ENCODE measurements at regions of chr7 and their contacts with region 1.

Region 1: GRCh38 chr7:121547544-121548092 is 151.5 kb upstream of the FAM3C start:
- DNase-seq: peak; percentile 66
- H3K4me3 Mint-ChIP-seq: no peak overlapping the region
- H3K27ac Mint-ChIP-seq: peak overlapping the region; percentile 2
- H3K4me1 Mint-ChIP-seq: peaks cover 41% of the 10 kb centered on the region
- H3K27me3 Mint-ChIP-seq: peaks cover 2% of the 10 kb centered on the region

Region 2: DNA sequence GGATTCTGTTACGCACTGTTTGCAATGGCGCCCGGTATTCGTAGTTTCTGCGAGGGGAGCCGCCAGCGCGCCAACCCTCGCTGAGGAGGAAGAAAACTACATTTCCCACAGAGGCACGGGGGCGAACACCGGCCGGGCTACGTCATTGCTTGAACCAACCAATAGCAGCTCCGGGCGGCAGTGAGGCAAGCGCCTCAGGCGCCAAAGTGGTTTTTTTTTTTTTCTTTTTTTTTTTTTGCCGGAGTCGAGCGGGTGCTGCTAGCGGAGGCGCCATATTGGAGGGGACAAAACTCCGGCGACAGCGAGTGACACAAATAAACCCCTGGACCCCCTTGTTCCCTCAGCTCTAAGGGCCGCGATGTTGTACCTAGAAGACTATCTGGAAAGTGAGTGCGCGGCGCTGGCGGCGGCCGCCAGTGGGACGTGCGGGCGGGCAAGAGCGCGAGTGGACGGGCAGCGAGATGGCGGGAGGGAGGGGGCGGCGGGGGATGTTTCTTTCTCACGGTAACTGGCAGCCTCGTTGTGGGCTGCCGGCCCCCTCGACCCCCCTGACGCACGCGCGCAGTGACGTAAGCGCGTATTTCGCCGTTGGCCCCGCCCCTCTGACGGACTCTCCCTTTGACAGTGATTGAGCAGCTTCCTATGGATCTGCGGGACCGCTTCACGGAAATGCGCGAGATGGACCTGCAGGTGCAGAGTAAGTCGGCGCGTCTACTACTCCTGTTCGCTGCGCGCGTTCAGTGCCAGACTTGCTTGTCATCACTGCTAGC is 596.9 kb before region 1 on chr7 and contains the start of gene ING3:
- intact Hi-C with region 1: loop called (anchors 2 kb)
- DNase-seq: peak; percentile 100
- H3K4me3 Mint-ChIP-seq: peak within 1 kb of the TSS; percentile 96
- H3K27ac Mint-ChIP-seq: peak within 1 kb of the TSS; percentile 99
- H3K4me1 Mint-ChIP-seq: peaks cover 23% of the 10 kb centered on the region
- H3K27me3 Mint-ChIP-seq: peaks cover 17% of the 10 kb centered on the region
- total RNA-seq, gene ING3: 23.5 and 24.3 TPM in 2 replicates

Region 3: GRCh38 chr7:121126801-121127534 is 420.6 kb before region 1 on chr7:
- intact Hi-C with region 1: loop called (anchors 10 kb)
- DNase-seq: no peak
- H3K4me3 Mint-ChIP-seq: no peak overlapping the region
- H3K27ac Mint-ChIP-seq: no peak overlapping the region
- H3K4me1 Mint-ChIP-seq: no peaks in the 10 kb centered on the region
- H3K27me3 Mint-ChIP-seq: peaks cover 7% of the 10 kb centered on the region

Region 4: DNA sequence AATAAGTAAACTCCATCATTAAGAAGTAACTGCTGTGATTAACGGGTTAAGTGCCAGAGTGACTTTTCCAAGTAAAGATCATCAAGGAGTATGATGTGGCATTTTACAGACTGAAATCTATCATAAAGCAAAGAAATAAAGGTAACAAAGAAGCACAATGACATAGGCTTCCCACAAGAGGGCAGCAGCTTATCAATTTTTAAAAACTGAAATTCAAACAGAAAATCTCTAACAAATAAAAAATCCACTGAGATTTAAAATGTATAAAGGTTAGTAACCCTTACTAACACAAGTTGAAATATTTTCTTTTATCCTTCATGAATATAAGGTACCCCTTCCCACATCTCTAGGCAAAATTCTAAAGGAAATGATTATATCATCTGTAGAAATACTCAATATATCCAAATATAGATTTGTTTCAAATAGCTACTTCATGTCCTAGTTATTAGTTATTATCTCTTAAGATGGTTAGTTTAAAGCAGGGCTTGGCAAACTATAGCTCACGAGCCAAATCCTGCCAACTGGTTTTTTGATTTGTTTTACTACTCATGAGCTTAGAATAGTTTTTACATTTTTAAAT is 180.7 kb before region 1 on chr7:
- intact Hi-C with region 1: loop called (anchors 1 kb)
- DNase-seq: peak; percentile 74
- H3K4me3 Mint-ChIP-seq: no peak overlapping the region
- H3K27ac Mint-ChIP-seq: peak overlapping the region; percentile 59
- H3K4me1 Mint-ChIP-seq: peaks cover 39% of the 10 kb centered on the region
- H3K27me3 Mint-ChIP-seq: no peaks in the 10 kb centered on the region

Region 5: GRCh38 chr7:121437456-121438127 is 110.0 kb before region 1 on chr7:
- intact Hi-C with region 1: loop called (anchors 1 kb)
- DNase-seq: no peak
- H3K4me3 Mint-ChIP-seq: peak overlapping the region; percentile 73
- H3K27ac Mint-ChIP-seq: peak overlapping the region; percentile 92
- H3K4me1 Mint-ChIP-seq: peaks cover 36% of the 10 kb centered on the region
- H3K27me3 Mint-ChIP-seq: no peaks in the 10 kb centered on the region

Region 6: DNA sequence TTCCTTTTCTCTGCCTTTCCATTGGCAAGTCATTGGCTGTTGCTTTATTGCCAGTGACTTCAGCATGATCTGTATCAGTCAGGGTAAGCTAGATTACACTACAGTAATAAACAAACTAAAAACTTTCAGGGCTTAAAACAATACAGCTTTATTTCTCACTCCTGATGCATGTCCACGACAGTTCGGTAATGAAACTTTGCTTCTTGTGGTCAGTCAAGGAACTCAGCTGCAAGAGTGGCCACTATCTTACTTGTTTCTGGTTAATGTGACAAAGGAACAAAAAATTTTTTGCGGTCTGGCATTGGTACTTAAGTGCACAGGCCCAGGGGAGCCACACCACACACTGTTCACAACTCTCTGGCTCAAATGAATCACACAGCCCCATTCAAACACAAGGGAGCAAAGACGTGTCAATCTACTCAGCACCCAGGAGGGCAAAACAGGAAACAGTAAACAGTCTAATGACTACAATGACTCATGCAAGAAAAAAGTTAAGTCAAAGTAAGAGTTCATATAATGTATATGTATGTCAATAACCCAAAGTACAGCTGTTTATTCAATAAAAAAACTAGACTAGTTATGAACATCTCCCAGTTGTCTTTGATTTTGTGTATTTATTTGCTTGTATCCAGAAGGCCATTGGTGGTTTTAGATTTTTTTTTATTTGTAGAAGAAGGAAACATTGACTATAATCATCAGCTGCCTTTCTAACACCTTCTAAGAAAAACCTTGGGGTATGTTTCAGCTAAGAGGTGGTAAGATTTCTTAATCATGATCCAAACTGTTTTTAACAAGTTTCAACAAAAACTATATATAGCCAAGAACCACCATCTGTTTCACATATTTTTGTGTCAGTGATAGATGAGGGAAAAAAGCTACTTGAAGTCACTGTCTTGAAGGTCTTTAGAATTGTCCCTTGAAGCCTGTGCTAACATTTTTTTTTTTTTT is 17.1 kb before region 1 on chr7:
- intact Hi-C with region 1: loop called (anchors 1 kb)
- DNase-seq: peak; percentile 89
- H3K4me3 Mint-ChIP-seq: peak overlapping the region; percentile 63
- H3K27ac Mint-ChIP-seq: peak overlapping the region; percentile 96
- H3K4me1 Mint-ChIP-seq: peaks cover 47% of the 10 kb centered on the region
- H3K27me3 Mint-ChIP-seq: no peaks in the 10 kb centered on the region

Region 7: GRCh38 chr7:121575194-121575765 is 27.7 kb after region 1 on chr7:
- intact Hi-C with region 1: no loop called
- DNase-seq: no peak
- H3K4me3 Mint-ChIP-seq: no peak overlapping the region
- H3K27ac Mint-ChIP-seq: no peak overlapping the region
- H3K4me1 Mint-ChIP-seq: no peaks in the 10 kb centered on the region
- H3K27me3 Mint-ChIP-seq: peaks cover 43% of the 10 kb centered on the region

Region 8: DNA sequence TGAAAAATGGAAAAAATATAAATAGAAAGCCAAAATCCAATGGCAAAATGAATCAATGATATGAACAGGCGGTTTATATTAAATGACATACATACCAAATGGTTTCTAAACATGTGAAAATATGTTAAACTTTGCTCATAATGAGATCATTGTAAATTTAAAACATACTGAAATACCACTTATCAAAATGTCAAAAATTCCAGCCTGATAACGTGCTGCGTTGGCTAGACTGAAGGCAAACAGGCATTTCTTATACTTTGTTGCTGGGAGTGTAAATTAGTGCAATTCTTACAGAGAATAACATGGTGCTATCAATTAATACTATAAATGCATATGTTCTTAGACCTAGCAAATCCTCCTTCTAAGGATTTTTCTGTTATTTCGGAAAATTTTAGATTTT is 74.3 kb after region 1 on chr7:
- intact Hi-C with region 1: no loop called
- DNase-seq: no peak
- H3K4me3 Mint-ChIP-seq: no peak overlapping the region
- H3K27ac Mint-ChIP-seq: no peak overlapping the region
- H3K4me1 Mint-ChIP-seq: no peaks in the 10 kb centered on the region
- H3K27me3 Mint-ChIP-seq: no peaks in the 10 kb centered on the region

Region 9: GRCh38 chr7:121961089-121961867 is 413.7 kb after region 1 on chr7:
- intact Hi-C with region 1: no loop called
- DNase-seq: no peak
- H3K4me3 Mint-ChIP-seq: no peak overlapping the region
- H3K27ac Mint-ChIP-seq: no peak overlapping the region
- H3K4me1 Mint-ChIP-seq: no peaks in the 10 kb centered on the region
- H3K27me3 Mint-ChIP-seq: no peaks in the 10 kb centered on the region